ENCODE measurements at regions of chr2 and their contacts with region 1.

Region 1: GRCh38 chr2:84905181-84906107 is at the start of gene TMSB10:
- DNase-seq: no peak
- H3K4me3 ChIP-seq: peak within 1 kb of the TSS; percentile 86
- CTCF ChIP-seq: no peak

Region 2: DNA sequence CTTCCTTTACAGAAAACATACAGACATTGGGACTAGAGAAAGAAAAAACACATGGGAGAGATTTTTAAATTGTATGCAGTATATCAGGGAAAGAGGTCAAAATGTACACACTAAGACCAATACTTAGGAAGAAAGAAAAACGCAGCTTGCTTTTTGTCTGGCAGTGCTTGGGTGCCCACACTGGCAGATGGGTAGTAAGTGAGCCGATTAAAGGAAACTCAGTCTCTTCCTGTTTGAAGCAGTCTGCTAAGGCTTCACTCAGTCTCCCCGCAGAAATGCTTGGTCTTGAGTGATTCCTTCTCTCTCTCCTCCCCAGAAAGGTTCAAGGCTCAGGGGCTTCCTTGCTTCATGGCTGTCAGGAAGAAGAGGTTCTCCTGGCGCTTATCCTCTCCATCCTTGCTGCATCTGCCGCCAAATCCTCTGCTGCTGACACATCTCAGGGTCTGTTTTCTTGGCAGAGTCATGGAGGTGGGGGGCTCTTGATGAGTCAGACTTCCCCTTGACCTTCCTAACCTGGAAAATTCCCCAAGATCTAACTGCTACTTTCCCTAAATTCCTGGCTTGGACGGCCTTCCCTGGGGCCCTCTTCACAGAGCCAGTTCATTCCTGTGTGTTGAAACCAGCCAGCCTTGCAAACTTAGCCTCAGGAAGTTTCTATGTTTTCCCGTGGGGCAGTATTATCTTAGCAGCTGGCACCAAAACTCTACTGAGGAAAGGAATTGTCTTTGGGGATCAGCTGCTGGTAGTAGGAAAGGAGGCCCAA is 10.5 kb before region 1 on chr2:
- CTCF ChIA-PET with region 1: interaction called, 3 read pairs
- POLR2A ChIA-PET with region 1: interaction called, 25 read pairs
- DNase-seq: no peak
- H3K4me3 ChIP-seq: no peak overlapping the region
- CTCF ChIP-seq: no peak

Region 3: DNA sequence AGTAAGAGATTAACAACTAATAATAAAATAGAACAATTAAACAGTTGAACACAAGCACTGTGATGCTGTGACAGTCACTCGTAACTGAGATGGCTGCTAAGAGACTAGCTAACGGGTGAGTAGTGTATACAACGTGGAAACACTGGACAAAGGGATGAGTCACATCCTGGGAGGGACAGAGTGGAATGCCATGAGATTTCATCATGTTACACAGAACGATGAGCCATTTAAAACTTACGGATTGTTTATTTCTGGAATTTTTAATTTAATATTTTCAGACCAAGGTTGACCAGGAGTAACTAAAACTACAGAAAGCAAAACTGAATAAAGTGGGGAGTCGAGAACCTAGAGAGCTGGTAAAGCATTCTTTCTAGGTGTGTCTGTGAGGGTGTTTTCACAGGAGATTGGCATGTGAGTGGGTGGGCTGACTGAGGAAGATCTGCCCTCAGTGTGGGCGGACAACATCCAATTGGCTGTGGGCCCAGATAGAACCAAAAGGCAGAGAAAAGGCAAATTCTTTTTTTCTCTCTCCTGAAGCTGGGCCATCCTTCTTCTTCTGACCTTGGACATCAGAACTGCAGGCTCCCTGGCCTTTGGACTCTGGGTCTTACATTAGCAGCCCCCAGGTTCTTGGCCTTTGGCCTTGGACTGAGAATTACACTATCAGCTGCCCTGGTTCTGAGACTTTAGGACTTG is 14.6 kb after region 1 on chr2:
- CTCF ChIA-PET with region 1: interaction called, 50 read pairs
- POLR2A ChIA-PET with region 1: interaction called, 71 read pairs
- DNase-seq: peak; percentile 86
- H3K4me3 ChIP-seq: peak overlapping the region; percentile 39
- CTCF ChIP-seq: no peak

Region 4: GRCh38 chr2:84946204-84947009 is 41.0 kb after region 1 on chr2:
- CTCF ChIA-PET with region 1: no interaction called
- POLR2A ChIA-PET with region 1: interaction called, 18 read pairs
- DNase-seq: no peak
- H3K4me3 ChIP-seq: no peak overlapping the region
- CTCF ChIP-seq: no peak

Region 5: GRCh38 chr2:85017411-85018048 is 112.1 kb after region 1 on chr2:
- CTCF ChIA-PET with region 1: no interaction called
- POLR2A ChIA-PET with region 1: no interaction called
- DNase-seq: no peak
- H3K4me3 ChIP-seq: no peak overlapping the region
- CTCF ChIP-seq: no peak